MCF 10A (cell line): ENCODE measurements at regions of chr18 and their contacts with region 1.

Region 1: GRCh38 chr18:6994771-6995435 is 122.7 kb downstream of the LAMA1 start:
- DNase-seq: peak; percentile 64
- H3K4me3 Mint-ChIP-seq: peak overlapping the region; percentile 59
- H3K27ac Mint-ChIP-seq: peak overlapping the region; percentile 90
- H3K4me1 Mint-ChIP-seq: peaks cover 15% of the 10 kb centered on the region
- H3K27me3 Mint-ChIP-seq: no peaks in the 10 kb centered on the region
- CTCF ChIP-seq: no peak

Region 2: DNA sequence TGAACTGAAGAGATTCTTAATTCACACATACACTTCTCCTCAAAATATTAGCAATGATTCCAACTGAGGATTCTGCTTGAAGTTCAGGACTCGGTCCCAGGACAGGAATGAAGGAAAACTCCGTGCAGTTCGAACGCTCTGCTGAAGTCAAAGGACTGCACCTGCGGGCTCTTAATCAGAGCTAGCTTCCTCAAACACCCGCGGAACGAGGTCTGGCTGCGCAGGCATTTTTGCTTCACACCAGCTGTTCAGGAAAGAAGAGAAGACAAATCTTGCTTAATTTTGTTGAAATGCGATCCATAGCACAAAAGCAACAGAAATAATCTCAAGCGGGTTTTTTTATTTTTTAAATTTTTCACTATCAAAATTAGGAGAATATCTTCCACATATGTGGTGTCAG is 52.9 kb before region 1 on chr18:
- CTCF ChIA-PET with region 1: interaction called, 15 read pairs
- POLR2A ChIA-PET with region 1: interaction called, 8 read pairs
- intact Hi-C with region 1: loop called (anchors 2 kb)
- DNase-seq: no peak
- H3K4me3 Mint-ChIP-seq: no peak overlapping the region
- H3K27ac Mint-ChIP-seq: no peak overlapping the region
- H3K4me1 Mint-ChIP-seq: no peaks in the 10 kb centered on the region
- H3K27me3 Mint-ChIP-seq: no peaks in the 10 kb centered on the region
- CTCF ChIP-seq: no peak

Region 3: GRCh38 chr18:6960656-6961055 is 34.2 kb before region 1 on chr18:
- CTCF ChIA-PET with region 1: interaction called, 4 read pairs
- POLR2A ChIA-PET with region 1: interaction called, 23 read pairs
- intact Hi-C with region 1: no loop called
- DNase-seq: peak; percentile 48
- H3K4me3 Mint-ChIP-seq: no peak overlapping the region
- H3K27ac Mint-ChIP-seq: peak overlapping the region; percentile 24
- H3K4me1 Mint-ChIP-seq: peaks cover 24% of the 10 kb centered on the region
- H3K27me3 Mint-ChIP-seq: no peaks in the 10 kb centered on the region
- CTCF ChIP-seq: no peak

Region 4: DNA sequence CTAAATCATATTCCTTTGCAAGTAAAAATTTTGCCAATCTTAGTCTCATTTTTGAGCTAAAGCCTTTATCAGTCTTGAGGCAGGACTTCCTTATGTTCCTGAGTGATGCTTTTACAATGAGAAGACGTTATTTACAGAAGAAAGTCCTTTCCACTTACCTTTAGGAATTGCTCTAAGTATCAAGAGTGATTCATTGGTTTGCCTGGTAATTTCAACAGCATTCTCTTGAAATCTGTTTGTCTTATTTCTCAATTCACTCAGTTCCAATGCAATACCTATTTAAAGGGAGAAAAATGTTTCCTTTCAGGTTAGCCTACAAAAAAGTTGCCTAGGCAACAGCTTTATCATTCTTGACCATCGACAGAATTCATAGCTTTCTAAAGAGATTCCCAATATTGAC is 14.5 kb before region 1 on chr18:
- CTCF ChIA-PET with region 1: interaction called, 6 read pairs
- POLR2A ChIA-PET with region 1: interaction called, 14 read pairs
- intact Hi-C with region 1: no loop called
- DNase-seq: no peak
- H3K4me3 Mint-ChIP-seq: no peak overlapping the region
- H3K27ac Mint-ChIP-seq: no peak overlapping the region
- H3K4me1 Mint-ChIP-seq: no peaks in the 10 kb centered on the region
- H3K27me3 Mint-ChIP-seq: no peaks in the 10 kb centered on the region
- CTCF ChIP-seq: no peak